Psoas muscle (tissue), 8 donors: ENCODE measurements at regions of chr2 and their contacts with region 1.

Region 1: DNA sequence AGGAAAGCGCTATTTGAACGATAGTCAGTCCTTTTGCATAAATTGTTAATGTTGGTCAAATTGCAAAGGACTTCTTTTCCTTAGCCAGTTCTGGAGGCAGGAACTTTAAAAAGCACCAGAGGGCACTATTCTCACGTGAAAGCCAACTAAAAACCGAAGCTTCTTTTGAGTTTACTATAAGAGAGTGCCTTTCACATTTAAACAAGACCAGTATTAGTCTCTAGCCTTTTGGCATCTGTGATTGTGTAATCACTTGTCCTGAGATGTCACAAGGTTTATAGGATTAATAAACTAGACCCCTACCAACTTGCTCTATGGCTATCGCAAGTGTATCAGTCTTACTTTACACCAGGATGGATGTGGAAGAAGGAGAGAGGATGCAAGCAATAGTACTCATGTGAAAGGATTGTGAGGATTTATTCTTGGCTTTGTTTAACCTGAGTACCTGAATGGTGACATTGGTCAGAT is 14.4 kb upstream of the STAT4 start:
- DNase-seq: no peak
- ATAC-seq: peak; percentile 67 to 90 (median 75)
- H3K4me3 ChIP-seq: no peak overlapping the region
- H3K27ac ChIP-seq: no peak overlapping the region
- H3K4me1 ChIP-seq: peaks cover 20% of the 10 kb centered on the region
- H3K27me3 ChIP-seq: no peaks in the 10 kb centered on the region
- CTCF ChIP-seq: peak; percentile 65

Region 2: DNA sequence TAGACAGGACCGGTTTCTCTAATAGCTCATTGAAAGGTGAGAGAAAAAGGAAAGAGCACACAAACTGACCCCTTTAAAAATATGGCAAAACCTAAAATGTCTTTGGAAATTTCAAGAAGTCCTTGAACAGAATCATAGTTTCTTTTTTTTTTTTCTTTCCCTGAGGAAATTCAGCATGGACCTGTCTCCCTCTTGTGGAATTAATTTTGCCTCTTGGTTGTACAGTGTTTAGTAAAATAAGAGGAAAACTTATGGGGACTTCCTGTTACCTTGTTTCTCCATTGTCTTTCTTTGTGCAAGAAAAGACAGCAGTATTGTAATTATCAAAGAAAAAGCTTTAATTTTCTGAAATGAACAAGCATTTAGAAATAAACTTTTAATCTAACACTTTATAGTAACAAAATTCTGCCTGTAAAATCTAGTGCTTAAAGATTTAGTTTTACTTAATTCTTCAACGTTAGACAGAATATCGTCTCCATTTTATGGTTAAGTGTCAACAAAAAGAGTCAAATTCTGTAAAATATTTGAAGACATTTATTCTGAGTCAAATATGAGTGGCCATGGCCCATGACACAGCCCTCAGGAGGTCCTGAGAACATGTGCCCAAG is 336.5 kb after region 1 on chr2:
- intact Hi-C with region 1: loop called in 1 of 2 experiments (anchors 5 kb)
- DNase-seq: no peak
- ATAC-seq: no peak
- H3K4me3 ChIP-seq: no peak overlapping the region
- H3K27ac ChIP-seq: no peak overlapping the region
- H3K4me1 ChIP-seq: no peaks in the 10 kb centered on the region
- H3K27me3 ChIP-seq: no peaks in the 10 kb centered on the region
- CTCF ChIP-seq: peak; percentile 49

Region 3: GRCh38 chr2:191521608-191522208 is 356.5 kb after region 1 on chr2:
- intact Hi-C with region 1: loop called (anchors 2 to 5 kb)
- DNase-seq: no peak
- ATAC-seq: no peak
- H3K4me3 ChIP-seq: no peak overlapping the region
- H3K27ac ChIP-seq: no peak overlapping the region
- H3K4me1 ChIP-seq: no peaks in the 10 kb centered on the region
- H3K27me3 ChIP-seq: no peaks in the 10 kb centered on the region
- CTCF ChIP-seq: peak; percentile 84